ENCODE measurements at regions of chr6 and their contacts with region 1.

Region 1: GRCh38 chr6:17156112-17156921 is 54.5 kb downstream of the STMND1 start:
- DNase-seq: peak in 4 of 5 donors; percentile 60 to 92 (median 78)
- H3K4me3 ChIP-seq: no peak overlapping the region
- H3K27ac ChIP-seq: no peak overlapping the region
- H3K4me1 ChIP-seq: no peaks in the 10 kb centered on the region
- H3K27me3 ChIP-seq: no peaks in the 10 kb centered on the region
- CTCF ChIP-seq: peak; percentile 87

Region 2: DNA sequence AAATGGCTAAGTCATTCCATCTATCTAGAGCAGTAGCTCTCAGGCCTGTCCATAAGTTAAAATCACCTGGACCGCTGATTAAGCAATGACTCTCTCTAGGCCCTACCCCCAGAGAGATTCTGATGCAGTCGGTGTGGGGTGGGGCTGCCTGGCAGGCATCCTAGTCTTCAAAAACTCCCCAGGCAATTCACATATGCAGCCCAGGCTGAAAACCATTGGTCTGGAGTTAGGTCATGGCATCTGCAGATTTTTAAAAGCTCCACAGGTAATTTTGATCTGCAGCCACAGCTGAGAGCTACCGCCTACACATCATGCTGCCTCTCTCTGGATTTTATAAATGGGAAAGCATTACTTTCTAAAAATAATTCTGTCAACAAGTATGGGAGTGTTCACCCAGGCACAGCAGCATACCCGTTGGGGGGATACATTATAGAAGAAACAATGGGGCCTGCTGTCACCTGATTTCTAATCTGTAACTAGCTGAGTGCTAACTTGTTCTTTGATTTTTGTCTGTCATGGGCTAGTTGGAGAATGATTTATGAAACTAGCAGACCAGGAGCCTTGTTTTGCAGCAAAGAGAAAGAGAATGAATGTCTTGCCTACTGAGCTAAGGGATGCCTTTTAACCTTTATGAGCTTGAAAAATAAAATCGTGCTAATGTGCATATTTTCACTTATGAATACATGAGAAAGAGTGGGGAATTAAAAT is 350.9 kb before region 1 on chr6:
- intact Hi-C with region 1: no loop called
- DNase-seq: peak in 4 of 5 donors; percentile 27 to 50 (median 46)
- H3K4me3 ChIP-seq: no peak overlapping the region
- H3K27ac ChIP-seq: peak overlapping the region in 1 of 2 donors; percentile 36
- H3K4me1 ChIP-seq: peaks cover 0 to 14% (median 2%) of the 10 kb centered on the region in 3 donors
- H3K27me3 ChIP-seq: no peaks in the 10 kb centered on the region
- CTCF ChIP-seq: no peak

Region 3: GRCh38 chr6:17258749-17259148 is 102.4 kb after region 1 on chr6:
- intact Hi-C with region 1: no loop called
- DNase-seq: no peak
- H3K4me3 ChIP-seq: no peak overlapping the region
- H3K27ac ChIP-seq: no peak overlapping the region
- H3K4me1 ChIP-seq: no peaks in the 10 kb centered on the region
- H3K27me3 ChIP-seq: no peaks in the 10 kb centered on the region
- CTCF ChIP-seq: no peak

Region 4: DNA sequence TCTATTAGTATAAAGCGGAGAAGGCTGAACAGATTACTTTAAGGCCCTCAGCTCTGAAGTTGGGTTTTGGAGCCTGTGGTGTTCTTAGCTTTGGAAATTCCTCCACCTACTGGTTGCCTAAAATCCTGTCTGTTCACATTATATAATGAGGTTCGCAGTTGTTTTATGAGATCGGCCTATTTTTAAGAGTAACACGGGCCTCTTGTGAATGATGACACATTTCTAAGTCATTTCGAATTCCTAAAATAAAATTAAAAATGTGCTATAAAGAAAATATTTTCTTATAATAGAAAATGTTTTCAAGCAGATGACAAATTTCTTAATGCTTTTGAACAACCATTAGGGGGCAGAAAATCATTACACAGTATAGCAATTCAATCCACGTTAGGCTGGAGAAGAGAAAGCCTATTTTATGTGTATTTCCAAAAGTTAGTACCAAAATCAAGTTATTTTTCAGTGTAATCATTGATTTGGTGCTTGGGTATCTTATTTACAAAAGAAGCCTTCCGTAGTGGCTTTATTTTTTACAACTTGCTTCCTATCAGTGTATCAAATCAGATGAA is 428.0 kb after region 1 on chr6:
- intact Hi-C with region 1: loop called (anchors 10 kb)
- DNase-seq: peak in 3 of 5 donors; percentile 51 to 91 (median 88)
- H3K4me3 ChIP-seq: peak overlapping the region in 2 of 3 donors; percentile 19 to 57
- H3K27ac ChIP-seq: peak overlapping the region in 1 of 2 donors; percentile 33
- H3K4me1 ChIP-seq: peaks cover 0 to 4% (median 0%) of the 10 kb centered on the region in 3 donors
- H3K27me3 ChIP-seq: no peaks in the 10 kb centered on the region
- CTCF ChIP-seq: peak; percentile 64

Region 5: GRCh38 chr6:17808609-17809008 is 652.3 kb after region 1 on chr6:
- intact Hi-C with region 1: loop called (anchors 10 kb)
- DNase-seq: no peak
- H3K4me3 ChIP-seq: no peak overlapping the region
- H3K27ac ChIP-seq: no peak overlapping the region
- H3K4me1 ChIP-seq: no peaks in the 10 kb centered on the region
- H3K27me3 ChIP-seq: no peaks in the 10 kb centered on the region
- CTCF ChIP-seq: no peak